ENCODE measurements at regions of chr5 and their contacts with region 1.

Region 1: DNA sequence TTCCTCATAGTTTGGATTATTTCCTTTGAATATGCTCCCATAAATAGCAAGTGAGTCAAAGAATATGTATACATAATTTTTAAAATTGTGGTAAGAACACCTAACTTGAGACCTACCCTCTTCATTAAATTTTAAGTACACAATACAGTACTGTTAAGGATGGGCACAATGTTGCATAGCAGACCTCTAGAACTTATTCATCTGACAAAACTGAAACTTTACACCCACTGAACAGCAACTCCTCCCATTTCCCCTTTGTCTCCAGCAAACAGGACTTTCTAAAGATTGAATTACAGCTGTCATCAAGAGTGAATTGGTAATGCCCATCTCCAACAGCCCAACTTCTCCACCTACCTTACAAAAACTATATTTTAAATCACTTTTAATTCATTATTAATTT is 388.9 kb downstream of the HTR1A start:
- DNase-seq: no peak

Region 2: DNA sequence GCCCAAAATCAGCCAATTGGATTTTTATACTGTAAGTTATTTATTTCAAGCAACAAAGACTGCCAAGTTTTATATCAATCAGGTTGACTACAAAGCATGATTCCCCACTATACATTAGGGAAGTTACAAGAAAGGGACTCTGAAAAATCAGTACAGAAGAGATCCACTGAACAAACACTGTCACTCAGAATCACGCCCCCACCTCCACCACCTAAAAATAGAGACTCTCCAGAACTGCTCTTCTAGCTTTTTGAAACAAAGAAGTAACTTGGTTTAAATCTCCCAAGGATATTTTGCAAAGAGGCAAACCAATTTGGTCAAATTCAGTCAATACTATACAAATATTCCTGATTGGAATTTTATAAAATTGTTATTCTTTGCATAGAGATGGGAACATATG is 49.1 kb before region 1 on chr5:
- intact Hi-C with region 1: loop called in 1 of 2 experiments (anchors 10 kb)
- DNase-seq: no peak

Region 3: GRCh38 chr5:63648376-63648775 is 75.0 kb after region 1 on chr5:
- intact Hi-C with region 1: no loop called
- DNase-seq: no peak

Measured in posterior vena cava (tissue), 2 donors.